H1 (cell line): ENCODE measurements at regions of chr3 and their contacts with region 1.

Region 1: DNA sequence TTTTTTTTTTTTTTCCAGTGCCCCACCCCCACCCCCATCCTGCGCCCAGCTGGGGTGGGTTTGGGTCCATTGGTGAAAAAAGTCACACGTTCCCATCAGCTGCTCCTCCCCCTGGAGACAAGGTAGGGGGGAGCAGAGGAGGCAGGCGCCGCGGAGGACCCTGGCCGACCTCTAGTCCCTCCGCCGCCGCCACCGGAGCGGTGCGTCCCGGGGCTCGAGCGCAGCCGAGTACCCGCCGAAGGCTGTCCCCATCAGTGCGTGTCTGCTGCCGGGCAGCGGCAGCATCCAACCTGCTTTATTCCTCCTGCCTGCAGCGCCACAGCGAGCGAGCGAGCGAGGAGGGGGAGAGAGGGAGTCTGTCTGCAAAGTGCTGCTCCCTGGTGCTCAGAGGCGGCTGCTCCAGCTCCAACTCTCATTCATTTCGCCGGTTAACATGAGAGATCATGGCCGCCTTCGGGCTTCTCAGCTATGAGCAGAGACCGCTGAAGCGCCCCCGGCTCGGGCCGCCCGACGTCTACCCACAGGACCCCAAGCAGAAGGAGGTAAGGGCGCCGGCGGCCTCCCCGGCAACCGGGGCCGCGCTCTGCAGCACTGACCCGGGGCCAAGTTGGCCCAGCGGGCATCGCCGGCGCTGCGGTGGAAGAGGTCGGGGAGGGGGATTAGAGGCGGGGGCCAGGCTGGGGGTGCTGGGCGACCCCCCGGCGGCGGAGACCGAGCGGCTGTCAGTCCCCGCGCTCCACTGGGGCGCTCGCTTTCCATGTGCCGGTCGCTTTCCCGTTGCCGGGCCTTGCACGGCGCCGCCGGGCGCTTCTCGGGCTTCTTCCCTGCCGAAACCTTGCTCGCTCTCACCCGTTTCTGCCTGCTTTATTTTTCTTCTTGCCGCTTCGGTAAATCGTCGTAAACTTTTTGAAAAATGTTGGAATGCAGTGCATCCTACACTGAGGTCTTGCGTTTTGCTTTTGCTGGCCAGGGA is 1.3 kb downstream of the MED12L start:
- DNase-seq: peak in 1 of 2 experiments; percentile 76
- H3K4me3 ChIP-seq: peak overlapping the region; percentile 55 to 76 (median 72)
- H3K27ac ChIP-seq: no peak overlapping the region
- H3K4me1 ChIP-seq: peaks cover 2 to 20% (median 9%) of the 10 kb centered on the region in 4 experiments; a peak in 6 of 7 replicates
- H3K27me3 ChIP-seq: peaks cover 2 to 7% (median 5%) of the 10 kb centered on the region in 4 experiments; a peak in 6 of 7 replicates
- CTCF ChIP-seq: peak; percentile 39 to 47 (median 41)
- EP300 ChIP-seq: no peak
- POLR2A ChIP-seq: peak in 1 of 2 experiments; percentile 62; a peak in 2 of 3 replicates
- RAD21 ChIP-seq: peak; percentile 23 to 46

Region 2: DNA sequence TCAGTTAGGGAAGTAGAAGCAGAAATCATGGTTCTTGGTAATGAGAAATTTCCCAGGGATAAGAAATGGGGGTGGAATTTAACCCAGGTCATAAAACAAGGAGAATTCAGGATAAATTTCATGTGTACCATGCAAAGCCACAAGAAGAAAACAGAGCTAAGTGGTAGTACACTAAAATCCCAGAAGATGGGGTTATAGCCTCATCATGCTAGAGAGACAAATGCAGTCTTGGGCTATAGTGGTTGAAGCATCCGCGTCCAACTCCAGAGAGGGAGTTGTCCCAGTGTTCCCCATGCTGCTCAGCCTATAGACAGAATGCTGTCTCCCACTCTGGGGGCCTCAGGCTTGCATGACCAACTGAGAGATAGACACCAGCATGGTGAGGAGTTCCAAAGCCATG is 78.1 kb before region 1 on chr3:
- CTCF ChIA-PET with region 1: interaction called, 18 read pairs
- POLR2A ChIA-PET with region 1: no interaction called
- DNase-seq: no peak
- H3K4me3 ChIP-seq: no peak overlapping the region
- H3K27ac ChIP-seq: no peak overlapping the region
- H3K4me1 ChIP-seq: peaks cover 0 to 2% (median 0%) of the 10 kb centered on the region in 4 experiments; a peak in 1 of 7 replicates
- H3K27me3 ChIP-seq: no peaks in the 10 kb centered on the region
- CTCF ChIP-seq: peak in 1 of 3 experiments; percentile 32; a peak in 2 of 4 replicates
- EP300 ChIP-seq: no peak
- POLR2A ChIP-seq: no peak
- RAD21 ChIP-seq: peak; percentile 68 to 76

Region 3: DNA sequence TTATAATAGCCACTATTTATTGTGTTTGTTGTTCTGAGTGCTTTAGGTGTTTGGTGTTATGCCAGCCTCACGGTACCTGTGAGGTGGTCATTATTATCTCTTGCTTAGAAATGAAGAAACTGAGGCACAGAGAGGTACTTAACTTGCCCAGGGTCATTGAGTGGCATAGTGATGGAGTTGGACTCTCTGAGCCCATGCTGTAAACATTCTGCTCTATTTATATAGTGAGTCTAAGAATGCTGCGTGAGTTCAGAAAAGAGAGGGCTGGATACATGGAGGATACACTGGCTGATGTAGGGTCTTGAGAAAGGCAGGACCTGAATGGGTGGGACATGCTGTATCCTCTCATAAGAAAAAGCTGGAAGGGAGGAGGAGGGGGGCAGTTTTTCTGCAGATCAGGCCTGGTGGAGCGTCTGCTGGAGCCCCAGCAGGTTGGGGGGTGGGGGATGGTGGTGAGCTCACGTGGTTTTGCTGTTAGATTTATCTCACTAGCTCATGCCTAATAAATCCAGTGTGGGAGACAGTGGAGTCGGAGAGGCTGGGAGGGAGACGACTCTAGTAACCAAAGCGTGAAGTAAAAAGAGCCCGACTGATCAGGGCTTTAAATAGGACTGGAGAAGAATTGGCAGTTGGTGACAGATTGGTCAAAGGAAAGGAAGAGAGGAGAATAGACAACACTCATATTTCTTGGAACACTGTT is 14.7 kb after region 1 on chr3:
- CTCF ChIA-PET with region 1: interaction called, 43 read pairs
- POLR2A ChIA-PET with region 1: interaction called, 19 read pairs
- DNase-seq: no peak
- H3K4me3 ChIP-seq: no peak overlapping the region
- H3K27ac ChIP-seq: no peak overlapping the region
- H3K4me1 ChIP-seq: peaks cover 0 to 9% (median 7%) of the 10 kb centered on the region in 4 experiments; a peak in 5 of 7 replicates
- H3K27me3 ChIP-seq: no peaks in the 10 kb centered on the region
- CTCF ChIP-seq: no peak
- EP300 ChIP-seq: no peak
- POLR2A ChIP-seq: no peak
- RAD21 ChIP-seq: no peak

Region 4: DNA sequence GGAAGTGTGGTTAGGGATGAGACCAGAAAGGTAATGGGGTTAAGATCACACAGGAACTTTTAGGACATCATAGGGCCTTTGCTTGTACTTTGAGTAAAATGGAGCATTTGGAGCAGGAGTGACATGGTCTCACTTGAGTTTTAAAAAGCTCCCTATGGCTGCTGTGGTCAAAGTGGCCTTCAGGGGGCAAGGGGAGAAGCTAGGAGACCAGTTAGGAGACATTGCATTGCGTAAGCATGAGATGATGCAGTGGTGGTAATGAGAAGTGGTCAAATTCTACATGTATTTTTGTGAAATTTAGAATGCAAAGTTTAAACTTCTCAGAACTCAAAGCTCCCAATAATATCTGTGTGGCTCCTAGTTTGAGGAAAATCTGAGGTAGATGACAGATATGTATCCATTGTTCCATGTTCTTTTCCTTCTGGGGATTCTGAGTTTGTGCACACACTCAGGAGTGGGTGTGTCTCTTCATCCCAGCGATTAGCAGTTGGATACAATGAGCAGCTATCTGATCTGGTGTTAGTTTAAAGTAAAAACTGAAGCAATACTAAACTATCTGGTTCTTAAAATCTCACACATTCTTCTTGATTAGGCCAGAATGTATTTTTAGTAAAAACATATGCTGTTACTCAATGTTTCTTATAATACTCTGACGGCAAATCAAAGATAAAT is 26.7 kb after region 1 on chr3:
- CTCF ChIA-PET with region 1: interaction called, 19 read pairs
- POLR2A ChIA-PET with region 1: interaction called, 10 read pairs
- DNase-seq: no peak
- H3K4me3 ChIP-seq: no peak overlapping the region
- H3K27ac ChIP-seq: no peak overlapping the region
- H3K4me1 ChIP-seq: peaks cover 0 to 1% (median 0%) of the 10 kb centered on the region in 4 experiments; a peak in 1 of 7 replicates
- H3K27me3 ChIP-seq: no peaks in the 10 kb centered on the region
- CTCF ChIP-seq: peak in 1 of 3 experiments; percentile 4; a peak in 1 of 4 replicates
- EP300 ChIP-seq: no peak
- POLR2A ChIP-seq: no peak
- RAD21 ChIP-seq: no peak; a peak in 1 of 4 replicates

Region 5: DNA sequence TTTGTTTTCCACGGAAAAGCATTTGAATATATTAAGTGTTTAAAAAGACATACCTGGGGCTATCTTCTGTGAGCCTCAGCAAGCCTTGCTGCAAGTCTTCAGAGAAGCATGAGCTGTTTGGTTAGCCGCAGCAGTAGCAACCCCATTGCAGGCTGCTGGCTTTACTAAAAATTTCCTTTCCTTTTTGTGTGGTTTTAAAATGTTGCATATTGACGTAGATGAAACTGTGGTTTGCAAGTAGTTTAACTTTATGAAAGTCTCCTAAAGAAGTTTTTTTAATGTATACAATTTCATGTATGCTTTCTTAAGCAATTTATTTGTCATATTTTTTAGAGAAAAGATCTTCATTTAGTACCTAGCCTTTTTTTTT is 116.3 kb after region 1 on chr3 and contains the start of gene GPR171:
- CTCF ChIA-PET with region 1: no interaction called
- POLR2A ChIA-PET with region 1: no interaction called
- DNase-seq: no peak
- H3K4me3 ChIP-seq: no peak within 1 kb of the TSS
- H3K27ac ChIP-seq: no peak within 1 kb of the TSS
- H3K4me1 ChIP-seq: no peaks in the 10 kb centered on the region
- H3K27me3 ChIP-seq: no peaks in the 10 kb centered on the region
- CTCF ChIP-seq: no peak
- EP300 ChIP-seq: no peak
- POLR2A ChIP-seq: no peak
- RAD21 ChIP-seq: no peak
- total RNA-seq, gene GPR171: not detected in 2 replicates